Posterior vena cava (tissue), 2 donors: ENCODE measurements at regions of chr7 and their contacts with region 1.

Region 1: GRCh38 chr7:444606-445005 is 75.0 kb downstream of the PDGFA start:
- DNase-seq: no peak

Region 2: GRCh38 chr7:379456-380138 is 65.0 kb before region 1 on chr7:
- intact Hi-C with region 1: no loop called
- DNase-seq: peak; percentile 81

Region 3: GRCh38 chr7:490461-491291 is 46.1 kb after region 1 on chr7:
- intact Hi-C with region 1: loop called in 1 of 2 experiments (anchors 5 kb)
- DNase-seq: peak; percentile 77